Tibial artery (tissue), 4 donors: ENCODE measurements at regions of chr10 and their contacts with region 1.

Region 1: GRCh38 chr10:99394761-99395386 is 35.5 kb downstream of the GOT1 start:
- DNase-seq: no peak
- H3K4me3 ChIP-seq: no peak overlapping the region
- H3K27ac ChIP-seq: no peak overlapping the region
- H3K4me1 ChIP-seq: peaks cover 0 to 3% (median 0%) of the 10 kb centered on the region in 4 donors
- H3K27me3 ChIP-seq: no peaks in the 10 kb centered on the region
- CTCF ChIP-seq: no peak

Region 2: GRCh38 chr10:99329524-99330235 is 65.2 kb before region 1 on chr10:
- intact Hi-C with region 1: no loop called
- DNase-seq: no peak
- H3K4me3 ChIP-seq: peak overlapping the region; percentile 55 to 66
- H3K27ac ChIP-seq: no peak overlapping the region
- H3K4me1 ChIP-seq: peaks cover 0 to 21% (median 17%) of the 10 kb centered on the region in 4 donors
- H3K27me3 ChIP-seq: peaks cover 0 to 26% of the 10 kb centered on the region in 2 donors
- CTCF ChIP-seq: no peak

Region 3: DNA sequence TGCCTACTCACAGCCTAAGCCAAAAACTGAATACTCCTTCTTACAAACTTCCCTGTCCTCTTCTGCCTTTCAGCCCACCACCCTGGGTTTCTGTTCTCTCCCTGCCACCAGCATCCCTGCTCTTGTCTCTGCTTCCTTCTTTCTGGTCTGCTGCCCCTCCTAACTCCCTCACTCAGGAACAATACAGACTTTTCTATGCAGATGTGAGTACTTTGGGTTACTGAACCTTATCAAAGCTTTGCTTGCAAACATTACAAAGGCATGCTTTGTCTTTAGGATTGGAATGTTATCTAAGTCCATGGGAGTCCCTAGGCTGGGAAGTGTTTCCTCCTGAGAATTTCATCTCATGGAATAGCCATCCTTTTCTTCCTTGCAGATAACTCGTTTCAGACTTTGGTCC is 36.8 kb before region 1 on chr10:
- intact Hi-C with region 1: no loop called
- DNase-seq: no peak
- H3K4me3 ChIP-seq: no peak overlapping the region
- H3K27ac ChIP-seq: no peak overlapping the region
- H3K4me1 ChIP-seq: no peaks in the 10 kb centered on the region
- H3K27me3 ChIP-seq: no peaks in the 10 kb centered on the region
- CTCF ChIP-seq: no peak

Region 4: DNA sequence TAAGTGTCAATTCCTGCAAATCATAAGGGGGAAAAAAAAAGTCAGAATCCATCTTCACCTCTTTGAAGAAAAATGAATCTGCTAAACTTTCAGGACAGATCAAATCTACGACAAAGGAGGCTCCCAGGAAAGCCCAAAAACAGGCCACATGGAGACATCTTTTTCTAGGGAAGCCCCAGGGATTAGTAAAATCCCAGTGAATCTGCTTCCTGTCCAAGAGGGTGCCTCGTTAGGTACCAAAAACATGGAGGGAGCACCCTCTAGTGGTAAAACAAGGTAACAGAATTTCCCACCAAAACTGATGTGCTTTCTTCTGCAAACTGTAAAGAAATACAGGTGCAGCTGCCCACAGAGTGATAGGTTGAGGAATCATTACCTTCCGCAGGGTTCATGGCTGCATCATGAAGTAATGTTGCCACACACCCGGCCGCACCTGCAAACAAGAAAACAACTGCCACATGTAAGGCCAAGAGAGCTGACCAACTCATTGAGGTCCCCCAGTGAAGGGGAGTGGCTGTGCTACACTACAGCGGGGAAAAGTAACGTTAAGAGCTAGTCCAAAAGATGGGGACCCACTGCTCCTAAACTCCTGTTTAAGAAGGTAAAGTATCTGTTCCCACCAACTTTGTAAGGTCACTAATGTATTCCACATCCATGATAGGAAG is 217.4 kb after region 1 on chr10:
- intact Hi-C with region 1: loop called (anchors 5 kb)
- DNase-seq: no peak
- H3K4me3 ChIP-seq: no peak overlapping the region
- H3K27ac ChIP-seq: no peak overlapping the region
- H3K4me1 ChIP-seq: peaks cover 0 to 16% (median 7%) of the 10 kb centered on the region in 4 donors
- H3K27me3 ChIP-seq: no peaks in the 10 kb centered on the region
- CTCF ChIP-seq: peak; percentile 74 to 75